ENCODE measurements at regions of chr2 and their contacts with region 1.

Region 1: GRCh38 chr2:168346725-168347477 is 99.5 kb upstream of the STK39 start:
- DNase-seq: peak in 9 of 10 donors; percentile 45 to 78 (median 65)
- H3K4me3 ChIP-seq: peak overlapping the region; percentile 20 to 71 (median 59)
- H3K27ac ChIP-seq: peak overlapping the region in 7 of 59 donors; percentile 32 to 68 (median 61)
- H3K27me3 ChIP-seq: no peaks in the 10 kb centered on the region
- CTCF ChIP-seq: peak; percentile 82 to 97 (median 91)

Region 2: GRCh38 chr2:167509586-167509985 is 837.3 kb before region 1 on chr2:
- intact Hi-C with region 1: no loop called
- DNase-seq: no peak
- H3K4me3 ChIP-seq: peak overlapping the region in 4 of 59 donors; percentile 10 to 20 (median 12)
- H3K27ac ChIP-seq: no peak overlapping the region
- H3K27me3 ChIP-seq: no peaks in the 10 kb centered on the region
- CTCF ChIP-seq: no peak

Region 3: GRCh38 chr2:168220965-168221819 is 125.7 kb before region 1 on chr2:
- intact Hi-C with region 1: no loop called
- DNase-seq: no peak
- H3K4me3 ChIP-seq: peak overlapping the region in 3 of 59 donors; percentile 1 to 12 (median 8)
- H3K27ac ChIP-seq: peak overlapping the region in 39 of 59 donors; percentile 0 to 74 (median 49)
- H3K27me3 ChIP-seq: no peaks in the 10 kb centered on the region
- CTCF ChIP-seq: no peak

Region 4: DNA sequence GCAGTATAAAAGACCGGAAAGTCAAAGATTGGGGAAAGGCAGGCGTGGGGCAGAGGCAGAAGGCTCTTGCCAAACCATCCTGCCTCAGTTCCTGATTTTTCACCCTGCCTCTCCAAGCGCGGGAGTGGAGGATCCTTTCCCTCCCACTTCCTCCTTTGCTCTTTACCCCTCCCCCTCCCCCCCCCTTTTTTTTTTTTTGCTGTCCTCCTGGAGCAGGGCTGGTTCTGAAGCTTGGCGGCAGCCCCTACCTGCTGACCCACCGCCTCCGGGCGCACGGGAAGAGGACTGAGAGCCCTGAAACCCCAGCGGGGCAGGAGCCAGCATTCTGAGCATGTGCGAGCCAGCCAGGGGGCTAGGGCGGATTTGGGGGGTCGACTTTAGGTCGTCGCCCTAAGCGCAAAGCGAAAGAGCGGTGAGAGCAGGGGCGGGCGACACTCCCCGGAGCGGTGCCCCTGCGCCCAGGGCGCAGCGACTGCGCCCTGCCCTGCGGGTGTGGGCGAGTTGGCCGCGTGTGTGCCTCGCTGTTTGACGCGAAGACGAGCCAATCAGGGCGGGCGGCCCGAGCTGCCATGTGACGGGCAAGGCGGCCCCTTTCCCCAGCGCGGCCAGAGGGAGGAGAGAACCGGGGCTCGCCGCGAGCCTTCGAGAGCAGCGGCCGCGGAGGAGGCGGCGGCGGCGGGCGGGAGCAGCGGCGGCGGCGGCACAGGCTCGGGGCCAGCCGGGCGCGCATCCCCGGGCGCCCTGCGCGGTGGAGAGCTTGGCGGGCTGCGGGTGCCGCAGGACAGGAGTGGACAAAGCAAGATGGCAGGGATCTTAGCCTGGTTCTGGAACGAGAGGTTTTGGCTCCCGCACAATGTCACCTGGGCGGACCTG is 109.0 kb after region 1 on chr2 and contains the start of gene CERS6:
- intact Hi-C with region 1: loop called in 1 of 2 experiments (anchors 5 kb)
- DNase-seq: peak; percentile 79 to 97 (median 93)
- H3K4me3 ChIP-seq: peak within 1 kb of the TSS; percentile 48 to 99 (median 82)
- H3K27ac ChIP-seq: peak within 1 kb of the TSS in 56 of 59 donors; percentile 2 to 92 (median 84)
- H3K27me3 ChIP-seq: no peaks in the 10 kb centered on the region
- CTCF ChIP-seq: peak in 2 of 56 donors; percentile 7 to 10
- total RNA-seq, gene CERS6: 20.1 to 73.1 (median 49.0) TPM

Region 5: DNA sequence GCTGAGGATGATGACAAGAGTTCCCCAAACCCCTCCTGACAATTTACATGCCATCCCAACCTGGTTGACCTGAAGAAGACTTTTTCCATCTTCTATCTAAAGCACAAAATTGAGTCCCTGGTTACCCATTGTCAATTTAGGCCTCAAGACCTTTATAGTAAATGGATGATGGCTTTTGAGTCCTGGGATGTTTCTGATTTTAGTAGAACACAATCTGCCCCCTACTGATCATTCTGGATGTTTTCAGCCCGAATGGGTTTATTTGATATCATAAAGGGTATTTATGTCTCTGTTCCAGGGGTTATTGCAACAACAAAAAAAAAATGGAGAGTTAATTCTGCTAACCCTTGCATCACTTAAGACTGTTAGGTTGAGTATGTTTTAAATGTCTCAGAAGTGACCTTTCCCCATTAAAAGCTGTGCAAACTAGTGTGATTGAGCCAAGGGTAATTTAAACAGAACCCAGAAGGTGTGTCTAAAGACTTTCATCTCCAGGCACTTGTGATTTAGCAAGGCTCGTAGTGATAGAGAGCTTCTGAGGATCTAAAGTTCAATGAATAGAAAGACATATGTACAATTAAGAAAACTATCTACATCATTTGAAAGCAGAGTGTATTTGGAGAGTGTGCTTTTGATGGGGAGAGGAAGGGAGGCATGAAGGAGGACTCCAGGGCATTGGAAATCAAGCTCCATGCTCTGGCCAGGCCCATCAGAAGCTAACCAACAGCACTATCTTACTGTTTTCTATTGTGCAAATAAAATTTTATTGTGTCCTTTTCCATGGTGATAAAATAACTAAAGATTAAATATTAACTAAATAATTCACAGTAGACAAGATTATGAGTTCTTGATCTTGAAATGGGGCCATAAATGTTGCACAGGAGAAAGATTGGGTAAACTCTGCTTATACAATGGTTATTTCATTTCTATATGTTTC is 358.9 kb after region 1 on chr2:
- intact Hi-C with region 1: loop called (anchors 2 kb)
- DNase-seq: no peak
- H3K4me3 ChIP-seq: no peak overlapping the region
- H3K27ac ChIP-seq: no peak overlapping the region
- H3K27me3 ChIP-seq: no peaks in the 10 kb centered on the region
- CTCF ChIP-seq: peak in 54 of 56 donors; percentile 26 to 73 (median 49)

Region 6: DNA sequence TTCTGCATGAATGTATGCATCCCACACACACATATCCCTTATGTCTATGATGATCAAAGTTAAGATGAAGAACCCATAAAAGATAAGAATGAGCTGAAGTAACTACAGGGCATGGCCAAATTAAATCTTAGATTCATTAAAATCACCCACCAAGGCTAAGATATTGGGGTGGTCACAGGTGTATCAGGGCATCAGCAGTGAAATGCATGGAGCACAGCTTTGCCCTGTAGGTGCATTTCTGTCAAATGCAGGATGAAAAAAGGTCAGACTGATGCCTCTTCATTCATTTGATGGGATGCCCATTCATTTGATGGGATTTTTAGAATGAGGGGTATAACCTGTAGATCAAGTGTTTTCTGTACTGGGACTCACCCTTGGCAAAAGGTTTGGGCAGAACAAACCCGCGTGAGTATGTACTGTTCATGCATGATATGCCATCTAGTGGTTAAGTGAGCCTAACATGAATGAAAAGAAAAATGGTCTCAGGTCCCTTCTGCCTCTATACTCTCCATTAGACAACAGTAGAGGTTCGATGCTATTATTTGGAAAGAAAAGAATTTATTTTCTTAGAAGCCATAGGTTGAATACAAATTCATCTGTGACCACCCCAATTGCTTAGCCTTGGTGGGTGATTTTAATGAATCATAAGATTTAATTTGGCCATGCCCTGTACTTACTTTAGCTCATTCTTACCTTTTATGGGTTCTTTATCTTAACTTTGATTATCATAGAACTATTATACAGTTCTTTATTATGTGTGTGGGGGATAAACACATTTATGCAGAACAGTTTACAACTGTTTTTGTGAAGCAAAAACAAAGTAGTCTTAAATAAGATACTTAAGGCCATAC is 412.3 kb after region 1 on chr2:
- intact Hi-C with region 1: loop called in 1 of 2 experiments (anchors 5 kb)
- DNase-seq: no peak
- H3K4me3 ChIP-seq: no peak overlapping the region
- H3K27ac ChIP-seq: no peak overlapping the region
- H3K27me3 ChIP-seq: no peaks in the 10 kb centered on the region
- CTCF ChIP-seq: peak in 55 of 56 donors; percentile 24 to 75 (median 59)

Region 7: DNA sequence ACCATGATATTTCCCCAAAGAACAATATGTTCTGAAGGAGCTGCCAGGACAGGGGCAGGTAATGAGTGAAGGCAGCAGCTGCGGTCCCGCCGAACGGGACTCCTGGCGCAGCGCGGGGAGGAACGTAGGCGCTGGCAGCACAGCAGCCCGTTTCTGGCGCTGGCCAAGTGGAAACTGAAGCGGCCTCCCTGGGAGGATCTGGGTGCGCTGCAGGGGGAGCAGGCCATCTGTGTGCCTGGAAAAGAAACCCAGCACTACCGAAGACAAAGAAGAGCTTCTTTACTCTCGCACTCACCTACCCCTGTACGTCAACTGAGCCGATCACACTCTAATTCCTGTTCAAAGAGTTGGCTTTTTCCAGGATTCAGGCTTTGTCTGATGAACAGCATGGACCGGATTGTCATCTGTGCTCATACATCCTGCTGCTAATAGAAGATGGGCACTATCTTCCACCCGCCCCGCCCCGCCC is 566.0 kb after region 1 on chr2:
- intact Hi-C with region 1: loop called (anchors 10 kb)
- DNase-seq: peak; percentile 24 to 75 (median 60)
- H3K4me3 ChIP-seq: peak overlapping the region in 58 of 59 donors; percentile 15 to 67 (median 49)
- H3K27ac ChIP-seq: peak overlapping the region in 37 of 59 donors; percentile 4 to 77 (median 51)
- H3K27me3 ChIP-seq: no peaks in the 10 kb centered on the region
- CTCF ChIP-seq: peak in 2 of 56 donors; percentile 12 to 20